Calu3 (cell line): ENCODE measurements at regions of chr20 and their contacts with region 1.

Region 1: GRCh38 chr20:36886859-36887751 is 11.2 kb downstream of the TLDC2 start:
- DNase-seq: peak; percentile 97
- H3K4me3 Mint-ChIP-seq: no peak overlapping the region
- H3K27ac Mint-ChIP-seq: no peak overlapping the region
- H3K4me1 Mint-ChIP-seq: peaks cover 48% of the 10 kb centered on the region
- H3K27me3 Mint-ChIP-seq: no peaks in the 10 kb centered on the region
- CTCF ChIP-seq: peak; percentile 98

Region 2: GRCh38 chr20:36613974-36614373 is 273.1 kb before region 1 on chr20:
- CTCF ChIA-PET with region 1: no interaction called
- intact Hi-C with region 1: loop called (anchors 5 kb)
- DNase-seq: peak; percentile 33
- H3K4me3 Mint-ChIP-seq: no peak overlapping the region
- H3K27ac Mint-ChIP-seq: no peak overlapping the region
- H3K4me1 Mint-ChIP-seq: peaks cover 22% of the 10 kb centered on the region
- H3K27me3 Mint-ChIP-seq: no peaks in the 10 kb centered on the region
- CTCF ChIP-seq: no peak

Region 3: GRCh38 chr20:36773597-36774390 is 113.3 kb before region 1 on chr20 and contains the start of gene DSN1:
- CTCF ChIA-PET with region 1: interaction called, 7 read pairs
- intact Hi-C with region 1: loop called (anchors 10 kb)
- DNase-seq: peak; percentile 100
- H3K4me3 Mint-ChIP-seq: peak within 1 kb of the TSS; percentile 77
- H3K27ac Mint-ChIP-seq: peak within 1 kb of the TSS; percentile 93
- H3K4me1 Mint-ChIP-seq: peaks cover 24% of the 10 kb centered on the region
- H3K27me3 Mint-ChIP-seq: no peaks in the 10 kb centered on the region
- CTCF ChIP-seq: no peak
- total RNA-seq, gene DSN1: 36.7 and 42.5 TPM in 2 replicates

Region 4: DNA sequence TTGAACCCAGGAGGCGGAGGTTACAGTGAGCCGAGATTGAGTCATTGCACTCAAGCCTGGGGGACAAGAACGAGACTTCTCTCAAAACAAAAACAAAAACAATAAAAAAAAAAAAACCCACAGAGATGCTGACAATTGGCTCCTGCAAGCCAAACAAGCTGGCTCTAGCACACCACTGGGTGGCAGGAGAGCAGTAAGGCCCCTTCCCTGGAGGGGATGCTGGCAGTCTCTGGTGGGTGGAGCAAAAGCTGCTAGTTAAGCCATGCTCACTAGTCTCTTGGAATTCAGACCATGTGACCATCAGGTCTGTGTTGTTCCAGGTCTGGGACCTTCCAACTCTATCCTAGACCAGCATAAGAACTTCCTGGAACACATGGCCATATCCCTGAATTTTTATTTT is 94.7 kb before region 1 on chr20:
- CTCF ChIA-PET with region 1: interaction called, 5 read pairs
- intact Hi-C with region 1: loop called (anchors 2 kb)
- DNase-seq: peak; percentile 72
- H3K4me3 Mint-ChIP-seq: no peak overlapping the region
- H3K27ac Mint-ChIP-seq: no peak overlapping the region
- H3K4me1 Mint-ChIP-seq: no peaks in the 10 kb centered on the region
- H3K27me3 Mint-ChIP-seq: no peaks in the 10 kb centered on the region
- CTCF ChIP-seq: no peak

Region 5: GRCh38 chr20:36808317-36809257 is 78.5 kb before region 1 on chr20:
- CTCF ChIA-PET with region 1: interaction called, 18 read pairs
- intact Hi-C with region 1: no loop called
- DNase-seq: peak; percentile 86
- H3K4me3 Mint-ChIP-seq: no peak overlapping the region
- H3K27ac Mint-ChIP-seq: no peak overlapping the region
- H3K4me1 Mint-ChIP-seq: peaks cover 11% of the 10 kb centered on the region
- H3K27me3 Mint-ChIP-seq: no peaks in the 10 kb centered on the region
- CTCF ChIP-seq: peak; percentile 93

Region 6: GRCh38 chr20:36835453-36836198 is 51.5 kb before region 1 on chr20:
- CTCF ChIA-PET with region 1: interaction called, 6 read pairs
- intact Hi-C with region 1: loop called (anchors 10 kb)
- DNase-seq: peak; percentile 95
- H3K4me3 Mint-ChIP-seq: peak overlapping the region; percentile 71
- H3K27ac Mint-ChIP-seq: peak overlapping the region; percentile 88
- H3K4me1 Mint-ChIP-seq: peaks cover 16% of the 10 kb centered on the region
- H3K27me3 Mint-ChIP-seq: no peaks in the 10 kb centered on the region
- CTCF ChIP-seq: no peak